Astrocyte of the cerebellum (primary cell): ENCODE measurements at regions of chr2 and their contacts with region 1.

Region 1: DNA sequence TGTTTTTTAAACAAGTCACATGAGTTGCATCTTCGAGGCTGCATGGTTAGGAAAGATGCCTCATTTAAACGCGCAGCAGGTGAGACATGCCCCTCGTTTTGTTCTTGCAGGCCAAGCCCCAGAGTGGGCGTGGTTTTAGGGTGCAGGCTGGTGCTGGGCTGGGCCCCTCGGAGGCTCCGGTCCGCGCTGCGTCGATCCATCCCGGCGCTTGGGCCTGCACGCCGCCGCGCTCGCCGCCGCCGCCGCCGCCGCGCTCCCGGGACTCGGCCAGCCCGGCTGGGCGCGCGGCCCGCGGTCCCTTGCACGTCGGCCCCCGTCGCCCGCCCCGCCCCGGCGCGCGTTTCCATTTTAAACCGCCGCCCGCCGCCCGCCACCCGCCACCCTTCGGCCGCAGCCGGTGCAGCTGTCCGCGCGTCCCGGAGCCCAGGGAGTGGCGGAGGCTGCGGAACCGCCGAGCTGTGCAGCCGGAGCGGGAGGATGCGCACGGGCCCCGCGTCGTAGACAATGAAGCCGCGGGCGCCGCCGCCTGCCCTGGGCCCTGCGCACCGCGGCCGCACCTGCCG is 175.5 kb downstream of the AGAP1 start:
- DNase-seq: peak; percentile 24
- H3K4me3 ChIP-seq: peak overlapping the region; percentile 26
- CTCF ChIP-seq: no peak

Region 2: DNA sequence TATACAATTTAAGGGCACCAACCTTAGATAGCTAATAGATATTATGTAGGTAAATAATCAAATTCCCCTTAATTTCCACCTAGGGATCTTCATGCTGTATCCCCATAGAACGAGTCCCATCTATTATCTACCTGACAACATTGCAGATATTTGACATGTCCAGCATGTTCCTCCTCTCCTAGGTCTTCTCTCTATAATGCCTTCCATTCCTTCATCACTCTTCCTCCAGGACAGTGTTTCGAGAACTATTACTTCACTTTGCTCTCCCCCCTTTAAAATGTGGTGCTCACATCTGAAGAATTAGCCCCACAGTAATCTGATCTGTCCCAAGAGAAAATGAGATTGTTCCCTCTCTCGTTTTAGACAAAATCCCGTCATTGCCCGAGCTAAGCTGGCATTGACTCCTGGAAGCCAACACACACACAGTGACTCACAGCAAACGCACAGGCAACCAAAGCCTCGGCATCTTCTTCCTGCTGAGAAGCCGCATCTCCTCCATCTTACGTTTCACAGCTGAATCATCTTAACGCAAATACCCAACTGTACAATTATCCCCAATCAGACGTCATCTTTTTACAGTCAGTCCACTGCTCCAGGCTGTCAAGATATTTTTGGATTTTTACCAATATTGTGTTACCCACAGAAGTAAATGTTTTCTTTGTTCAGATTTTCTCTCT is 338.4 kb before region 1 on chr2:
- in situ Hi-C with region 1: no loop called
- DNase-seq: peak; percentile 82
- H3K4me3 ChIP-seq: no peak overlapping the region
- CTCF ChIP-seq: no peak

Region 3: GRCh38 chr2:235614900-235615712 is 54.2 kb before region 1 on chr2:
- in situ Hi-C with region 1: loop called (anchors 5 kb)
- DNase-seq: peak; percentile 51
- H3K4me3 ChIP-seq: no peak overlapping the region
- CTCF ChIP-seq: no peak

Region 4: DNA sequence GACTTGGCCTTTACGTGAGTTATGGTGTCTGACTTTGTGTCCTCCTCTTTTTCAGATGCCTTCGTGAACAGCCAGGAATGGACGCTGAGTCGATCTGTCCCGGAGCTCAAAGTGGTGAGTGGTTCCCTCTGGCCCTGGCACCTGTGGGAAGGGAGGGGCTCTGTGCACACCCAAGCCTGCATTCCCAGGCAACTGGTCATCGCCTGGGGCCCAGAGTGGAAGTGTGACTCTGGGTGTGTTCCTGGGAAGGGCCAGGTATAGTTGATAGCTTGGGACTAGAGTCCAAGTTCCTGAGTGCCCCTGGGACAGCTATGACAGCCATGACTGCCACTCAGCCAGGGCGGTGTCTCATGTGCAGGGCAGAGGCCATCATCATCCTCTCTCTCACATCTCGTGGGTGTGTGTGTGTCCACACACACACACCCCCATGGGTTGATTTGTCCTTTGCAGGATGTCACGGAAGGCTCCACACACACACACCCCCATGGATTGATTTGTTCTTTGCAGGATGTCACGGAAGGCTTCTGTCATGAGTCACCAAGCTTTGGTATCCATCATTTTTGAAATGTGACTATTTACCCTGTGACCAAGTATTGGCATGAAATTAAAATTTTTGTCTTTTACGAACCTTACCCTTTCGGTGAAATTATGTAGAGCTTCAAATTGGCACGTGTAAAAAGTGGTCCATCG is 39.9 kb after region 1 on chr2:
- in situ Hi-C with region 1: no loop called
- DNase-seq: no peak
- H3K4me3 ChIP-seq: no peak overlapping the region
- CTCF ChIP-seq: no peak

Region 5: DNA sequence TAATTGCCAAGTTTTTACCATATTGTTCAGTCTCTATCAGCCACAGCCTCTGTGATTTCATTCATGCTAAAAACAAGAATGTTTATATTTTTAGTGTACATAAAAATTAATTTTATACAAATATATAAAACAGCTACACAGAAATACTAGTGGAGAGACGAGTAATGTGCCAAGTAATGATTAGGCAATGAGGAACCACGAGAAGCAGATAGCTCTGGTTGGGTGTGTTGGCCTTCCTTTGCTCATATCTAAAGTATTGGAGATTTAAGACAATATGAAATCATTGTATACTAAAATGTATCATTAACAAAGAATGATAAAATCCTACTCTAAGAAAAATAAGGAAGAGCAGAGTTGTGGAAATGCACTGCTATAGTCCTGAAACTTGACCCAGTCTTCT is 151.2 kb after region 1 on chr2:
- in situ Hi-C with region 1: no loop called
- DNase-seq: no peak
- H3K4me3 ChIP-seq: no peak overlapping the region
- CTCF ChIP-seq: no peak